Ovary (tissue), 10 donors: ENCODE measurements at regions of chr2 and their contacts with region 1.

Region 1: DNA sequence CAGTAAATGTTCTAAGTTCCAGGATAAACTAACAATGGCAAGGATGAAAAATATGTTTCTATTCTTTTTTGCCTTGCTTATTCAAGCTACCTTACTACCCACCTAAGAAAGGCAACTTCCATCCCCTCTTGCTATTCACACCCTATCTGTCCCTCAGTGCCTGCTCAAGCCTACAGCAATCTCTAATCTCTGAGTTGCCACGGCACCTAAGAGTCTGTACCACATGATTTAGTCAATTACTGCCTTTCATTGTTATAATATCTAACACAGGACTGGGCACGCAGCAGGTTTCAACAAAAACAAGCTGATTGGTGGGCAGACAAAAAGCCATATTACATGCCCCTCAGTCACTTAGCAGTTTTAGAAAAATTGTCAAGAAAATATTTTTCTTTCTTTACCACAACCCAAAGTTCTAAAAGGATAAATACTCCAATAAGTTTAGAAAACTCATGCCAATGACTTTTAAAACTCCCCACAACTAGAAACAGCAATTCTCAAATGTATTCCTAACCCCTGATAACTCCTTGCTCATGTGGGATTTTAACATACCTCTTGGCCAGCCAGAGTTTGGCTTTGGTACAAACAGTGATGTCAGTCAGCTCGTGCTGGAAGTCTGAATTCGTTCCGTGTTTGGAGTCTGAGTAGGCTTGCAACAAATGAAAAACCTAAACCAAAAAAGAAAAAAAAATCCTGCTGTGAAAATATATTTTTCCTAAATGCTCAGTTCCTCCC is 117.3 kb upstream of the ZFP36L2 start:
- DNase-seq: peak; percentile 75 to 92 (median 85)
- H3K4me3 ChIP-seq: no peak overlapping the region
- H3K27ac ChIP-seq: peak overlapping the region; percentile 70 to 78
- H3K4me1 ChIP-seq: peaks cover 41% of the 10 kb centered on the region
- H3K27me3 ChIP-seq: no peaks in the 10 kb centered on the region
- CTCF ChIP-seq: no peak
- EP300 ChIP-seq: no peak
- POLR2A ChIP-seq: no peak

Region 2: DNA sequence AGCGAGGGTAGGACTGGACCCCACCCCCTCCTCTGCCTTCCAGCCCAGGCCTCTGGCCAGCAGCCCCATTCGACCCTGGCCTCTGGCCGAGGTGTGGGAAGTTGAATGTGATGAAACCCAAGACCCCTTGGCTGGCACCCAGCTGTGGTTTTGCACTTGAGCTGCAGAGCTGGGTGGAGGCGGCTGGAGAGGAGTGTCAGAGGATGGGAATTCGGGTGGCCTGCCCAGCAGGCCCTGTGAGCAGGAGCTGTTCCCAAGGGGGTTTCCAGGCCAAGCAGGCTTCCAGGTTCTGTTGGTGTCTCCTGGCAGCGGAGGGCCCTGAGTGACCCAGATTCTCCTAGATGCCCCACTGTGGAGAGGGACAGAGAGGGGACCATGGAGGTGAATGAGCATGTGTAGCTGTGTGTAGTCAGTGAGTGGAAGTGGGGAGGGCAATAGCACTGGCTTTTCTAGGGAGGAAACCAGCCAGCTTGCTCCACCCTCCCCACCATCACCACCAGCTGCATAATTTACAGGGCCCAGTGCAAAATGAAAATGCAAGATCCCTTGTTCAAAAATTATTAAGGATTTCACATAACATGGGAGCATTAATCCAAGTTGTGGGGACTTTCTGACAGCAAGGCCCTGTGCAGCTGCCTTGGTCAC is 379.2 kb before region 1 on chr2:
- intact Hi-C with region 1: loop called in 1 of 4 experiments (anchors 10 kb)
- DNase-seq: peak; percentile 71 to 80 (median 78)
- H3K4me3 ChIP-seq: no peak overlapping the region
- H3K27ac ChIP-seq: peak overlapping the region in 1 of 2 donors; percentile 94
- H3K4me1 ChIP-seq: peaks cover 51% of the 10 kb centered on the region
- H3K27me3 ChIP-seq: no peaks in the 10 kb centered on the region
- CTCF ChIP-seq: no peak
- EP300 ChIP-seq: no peak
- POLR2A ChIP-seq: no peak

Region 3: GRCh38 chr2:43399515-43400264 is 56.0 kb after region 1 on chr2:
- intact Hi-C with region 1: loop called in 1 of 4 experiments (anchors 10 kb)
- DNase-seq: peak in 1 of 5 donors; percentile 39
- H3K4me3 ChIP-seq: no peak overlapping the region
- H3K27ac ChIP-seq: peak overlapping the region in 1 of 2 donors; percentile 55
- H3K4me1 ChIP-seq: peaks cover 10% of the 10 kb centered on the region
- H3K27me3 ChIP-seq: no peaks in the 10 kb centered on the region
- CTCF ChIP-seq: no peak
- EP300 ChIP-seq: no peak
- POLR2A ChIP-seq: no peak